A673 (cell line): ENCODE measurements at regions of chr14 and their contacts with region 1.

Region 1: GRCh38 chr14:99683619-99684355 is at the start of gene CYP46A1:
- DNase-seq: peak; percentile 99
- H3K4me3 ChIP-seq: peak within 1 kb of the TSS; percentile 98
- H3K27ac ChIP-seq: peak within 1 kb of the TSS; percentile 84
- H3K4me1 ChIP-seq: no peaks in the 10 kb centered on the region
- H3K27me3 ChIP-seq: peaks cover 5% of the 10 kb centered on the region
- CTCF ChIP-seq: no peak
- total RNA-seq, gene CYP46A1: 0.37 TPM in 1 of 2 replicates, not detected in the other

Region 2: DNA sequence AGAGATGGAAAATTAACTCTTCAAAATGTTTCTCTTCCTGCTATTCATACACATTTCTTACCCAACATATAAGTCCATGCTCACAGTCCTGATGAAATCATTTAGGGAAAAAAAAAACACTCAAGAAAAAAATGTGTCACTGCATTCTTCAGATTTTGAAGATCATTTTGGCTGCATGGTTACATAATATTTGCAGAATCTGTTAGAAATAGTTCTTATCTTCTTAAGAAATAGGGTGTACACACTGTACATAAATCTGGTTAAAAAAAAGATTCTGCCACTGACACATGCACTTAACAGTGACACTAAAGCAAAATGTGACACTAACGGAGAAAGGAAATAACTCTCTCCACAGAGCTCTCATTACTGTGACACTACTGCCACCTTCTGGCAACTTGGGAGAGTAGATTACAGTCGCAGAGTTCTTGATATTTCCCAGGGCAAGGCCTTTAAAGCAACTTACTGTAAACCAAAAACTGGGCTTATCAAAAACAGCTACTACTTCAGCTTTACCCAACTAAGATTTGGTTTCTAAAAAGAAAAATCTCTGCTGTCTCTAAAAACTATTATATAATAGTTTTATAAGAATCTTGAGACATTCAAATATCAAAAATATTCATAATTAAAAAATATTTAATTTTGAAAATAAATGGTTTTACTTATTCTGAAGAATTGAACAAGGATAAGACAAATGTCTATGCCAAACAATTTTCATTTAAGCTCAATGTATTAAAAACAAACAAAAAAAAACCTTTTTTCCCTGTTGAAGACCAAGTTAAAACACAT is 268.1 kb before region 1 on chr14:
- CTCF ChIA-PET with region 1: interaction called, 14 read pairs
- POLR2A ChIA-PET with region 1: no interaction called
- intact Hi-C with region 1: no loop called
- DNase-seq: peak; percentile 94
- H3K4me3 ChIP-seq: peak overlapping the region; percentile 0
- H3K27ac ChIP-seq: no peak overlapping the region
- H3K4me1 ChIP-seq: peaks cover 22% of the 10 kb centered on the region
- H3K27me3 ChIP-seq: no peaks in the 10 kb centered on the region
- CTCF ChIP-seq: peak; percentile 88

Region 3: GRCh38 chr14:99604283-99604765 is 79.5 kb before region 1 on chr14:
- CTCF ChIA-PET with region 1: no interaction called
- POLR2A ChIA-PET with region 1: no interaction called
- intact Hi-C with region 1: loop called (anchors 2 kb)
- DNase-seq: peak; percentile 98
- H3K4me3 ChIP-seq: peak overlapping the region; percentile 85
- H3K27ac ChIP-seq: peak overlapping the region; percentile 89
- H3K4me1 ChIP-seq: peaks cover 24% of the 10 kb centered on the region
- H3K27me3 ChIP-seq: no peaks in the 10 kb centered on the region
- CTCF ChIP-seq: no peak

Region 4: GRCh38 chr14:99884834-99885648 is 201.3 kb after region 1 on chr14:
- CTCF ChIA-PET with region 1: interaction called, 4 read pairs
- POLR2A ChIA-PET with region 1: no interaction called
- intact Hi-C with region 1: loop called (anchors 1 kb)
- DNase-seq: peak; percentile 81
- H3K4me3 ChIP-seq: no peak overlapping the region
- H3K27ac ChIP-seq: peak overlapping the region; percentile 62
- H3K4me1 ChIP-seq: peaks cover 32% of the 10 kb centered on the region
- H3K27me3 ChIP-seq: no peaks in the 10 kb centered on the region
- CTCF ChIP-seq: peak; percentile 82

Region 5: DNA sequence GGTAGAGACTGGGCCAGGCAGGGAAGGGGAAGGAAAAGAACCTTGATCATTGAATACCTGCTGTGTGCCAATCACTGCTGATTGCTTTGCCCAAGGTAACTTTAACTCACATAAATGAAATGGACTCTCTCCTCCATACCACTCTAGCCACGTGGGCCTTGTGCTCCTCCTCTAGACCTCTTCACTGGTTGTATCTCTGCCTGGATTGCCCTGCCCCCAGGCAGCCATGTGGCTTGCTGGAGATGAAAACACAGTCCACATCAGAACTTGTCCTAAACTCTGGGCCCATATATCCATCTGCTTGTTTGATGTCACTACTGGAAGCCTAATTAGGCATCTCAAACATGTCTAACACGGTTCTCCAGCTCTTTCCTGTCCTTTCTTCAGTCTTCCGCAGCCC is 340.7 kb after region 1 on chr14:
- CTCF ChIA-PET with region 1: interaction called, 10 read pairs
- POLR2A ChIA-PET with region 1: no interaction called
- intact Hi-C with region 1: no loop called
- DNase-seq: no peak
- H3K4me3 ChIP-seq: no peak overlapping the region
- H3K27ac ChIP-seq: no peak overlapping the region
- H3K4me1 ChIP-seq: peaks cover 6% of the 10 kb centered on the region
- H3K27me3 ChIP-seq: no peaks in the 10 kb centered on the region
- CTCF ChIP-seq: no peak